ENCODE measurements at regions of chr11 and their contacts with region 1.

Region 1: GRCh38 chr11:73554671-73555320 is 43.1 kb downstream of the FAM168A start:
- DNase-seq: no peak

Region 2: DNA sequence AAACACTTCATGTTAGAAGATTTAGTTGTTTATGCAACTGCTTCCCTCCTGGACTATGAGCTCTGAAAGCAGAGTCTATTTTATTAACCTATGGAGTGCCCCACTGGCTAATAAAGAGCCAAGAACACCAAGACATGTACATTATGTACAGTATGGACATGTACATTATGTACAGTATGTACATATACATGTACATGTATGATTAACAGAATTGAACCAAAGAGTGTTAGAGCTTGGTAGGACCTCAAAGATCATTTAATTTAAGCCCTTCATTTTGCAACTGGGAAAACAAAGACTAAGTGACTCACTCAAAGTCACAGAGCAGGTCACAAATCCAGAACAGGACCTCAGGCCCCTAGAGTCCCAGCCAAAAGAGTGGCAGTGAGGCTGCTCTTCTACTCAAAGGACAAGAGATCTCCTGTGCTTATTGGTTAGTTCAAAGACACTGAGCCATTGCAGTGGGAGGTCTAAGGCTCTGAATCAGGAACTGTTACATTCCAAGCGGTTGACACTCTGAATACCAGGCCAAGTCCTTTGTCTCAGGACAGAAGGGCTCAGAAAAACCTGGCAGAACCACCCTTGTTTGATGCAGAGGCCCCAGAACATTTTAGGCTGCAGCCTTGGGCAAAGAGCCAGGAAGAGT is 60.7 kb before region 1 on chr11:
- intact Hi-C with region 1: loop called (anchors 10 kb)
- DNase-seq: no peak

Region 3: DNA sequence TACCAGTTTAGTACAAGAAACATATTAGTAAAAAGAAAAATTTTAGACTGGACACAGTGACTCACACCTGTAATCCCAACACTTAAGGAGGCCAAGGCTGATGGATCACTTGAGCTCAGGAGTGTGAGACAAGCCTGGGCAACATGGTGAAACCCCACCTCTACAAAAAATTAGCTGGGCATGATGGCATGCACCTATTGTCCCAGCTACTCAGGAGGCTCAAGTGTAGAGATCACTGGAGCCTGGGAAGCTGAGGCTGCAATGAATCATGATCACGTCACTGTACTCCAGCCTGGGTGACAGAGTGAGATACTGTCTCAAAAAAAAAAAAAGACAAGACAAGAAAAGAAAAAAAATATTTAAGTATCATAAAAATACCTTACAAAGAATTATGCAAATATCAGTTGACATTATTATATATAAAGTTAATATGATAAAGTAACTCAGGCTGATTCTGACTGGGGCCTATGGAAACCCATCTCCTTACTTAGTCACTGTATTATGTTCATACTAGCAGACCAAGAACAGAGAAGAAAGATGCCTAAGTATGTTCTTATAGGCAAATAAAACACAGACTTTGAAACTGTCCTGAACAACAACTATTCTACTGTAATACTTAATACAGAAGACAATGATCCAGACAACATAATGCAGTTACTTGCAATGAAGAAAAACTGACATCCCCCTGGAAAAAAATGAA is 15.8 kb after region 1 on chr11:
- intact Hi-C with region 1: loop called (anchors 1 kb)
- DNase-seq: no peak

Measured in cardiac septum (tissue), 1 donor.